ENCODE measurements at regions of chr11 and their contacts with region 1.

Region 1: DNA sequence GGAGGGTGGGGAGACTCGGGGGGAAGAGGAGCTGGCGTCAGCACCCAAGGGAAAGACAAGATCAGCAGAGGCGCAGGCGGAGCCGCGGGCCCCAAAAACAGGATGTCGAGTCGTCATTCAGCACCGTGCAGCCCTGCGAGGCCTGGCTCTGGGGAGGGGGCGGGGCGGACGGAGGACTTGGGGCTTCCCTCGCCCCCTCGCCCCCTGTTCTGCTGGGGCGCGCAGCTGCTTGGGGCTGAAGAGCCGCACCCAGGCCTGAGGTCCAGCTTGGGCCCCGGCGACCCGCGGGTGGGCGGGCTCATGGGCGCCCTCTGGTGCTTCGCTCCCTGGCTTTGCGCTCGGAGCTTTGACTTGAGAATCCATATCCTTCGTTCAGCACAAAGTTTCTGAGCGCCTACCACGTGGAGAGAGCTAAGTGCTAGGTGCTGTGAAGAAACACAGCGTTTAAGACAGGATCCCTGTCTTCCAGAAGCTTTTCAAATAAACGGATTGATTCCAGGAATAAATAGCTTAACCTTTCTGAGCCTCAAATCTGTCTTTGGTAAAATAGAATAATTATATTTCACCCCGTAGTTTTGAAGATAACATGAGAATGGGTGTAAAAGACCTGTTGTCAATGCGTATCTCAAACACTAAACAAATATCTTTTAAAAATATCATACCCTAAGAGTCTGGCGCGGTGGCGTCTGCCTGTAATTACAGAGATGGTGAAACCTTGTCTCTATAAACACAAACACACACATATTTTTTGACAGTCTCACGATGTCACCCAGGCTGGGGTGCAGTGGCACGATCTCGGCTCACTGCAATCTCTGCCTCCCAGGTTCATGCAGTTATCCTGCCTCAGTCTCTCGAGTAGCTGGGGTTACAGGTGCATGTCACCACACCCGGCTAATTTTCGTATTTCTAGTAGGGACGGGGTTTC is 929 bp upstream of the RHOG start:
- DNase-seq: peak; percentile 88
- H3K4me3 Mint-ChIP-seq: peak overlapping the region; percentile 80
- H3K27ac Mint-ChIP-seq: peak overlapping the region; percentile 62
- H3K4me1 Mint-ChIP-seq: peaks cover 22% of the 10 kb centered on the region
- H3K27me3 Mint-ChIP-seq: no peaks in the 10 kb centered on the region
- CTCF ChIP-seq: peak; percentile 71

Region 2: DNA sequence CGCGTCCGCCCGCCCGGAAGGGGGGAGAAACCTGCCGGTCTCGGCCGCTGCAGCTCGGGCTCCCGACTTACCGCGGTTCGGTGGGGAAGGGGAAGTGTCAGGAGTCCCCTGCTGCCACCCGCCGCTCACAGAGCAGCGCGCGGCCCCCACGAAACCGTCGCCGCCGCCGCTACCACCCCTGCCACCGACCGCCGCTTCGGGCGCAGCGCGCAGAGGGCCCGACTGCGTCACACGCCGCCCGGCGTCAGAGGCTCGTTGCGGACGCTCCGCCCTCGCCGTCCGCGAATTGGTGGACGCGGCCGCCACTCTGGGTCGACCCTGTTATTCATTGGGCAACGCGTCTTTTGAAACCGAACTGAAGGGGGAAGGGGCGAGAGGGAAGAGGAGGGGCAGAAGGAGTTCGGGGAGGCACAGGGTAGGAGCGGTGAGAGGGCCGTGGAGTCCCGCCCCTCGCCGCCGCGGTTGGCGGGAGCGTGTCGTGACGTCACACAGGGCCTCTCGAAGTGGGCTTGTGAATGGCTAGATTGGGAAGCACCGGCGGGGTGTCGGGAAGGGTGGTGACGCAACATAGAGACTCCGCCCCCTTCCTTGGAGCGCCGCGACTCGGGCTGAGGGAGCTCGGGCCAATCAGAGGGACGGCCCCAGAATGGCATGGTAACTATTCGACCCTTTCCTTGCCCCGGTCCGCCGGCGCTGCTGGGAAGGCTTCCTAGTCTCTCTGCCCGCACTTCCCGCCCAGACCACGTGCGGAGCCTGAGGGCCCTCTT is 44.2 kb before region 1 on chr11 and contains the start of gene NUP98:
- CTCF ChIA-PET with region 1: interaction called, 6 read pairs
- POLR2A ChIA-PET with region 1: interaction called, 19 read pairs
- intact Hi-C with region 1: loop called (anchors 1 kb)
- DNase-seq: peak; percentile 100
- H3K4me3 Mint-ChIP-seq: peak within 1 kb of the TSS; percentile 86
- H3K27ac Mint-ChIP-seq: peak within 1 kb of the TSS; percentile 93
- H3K4me1 Mint-ChIP-seq: peaks cover 9% of the 10 kb centered on the region
- H3K27me3 Mint-ChIP-seq: no peaks in the 10 kb centered on the region
- CTCF ChIP-seq: no peak
- total RNA-seq, gene NUP98: 79.4 and 83.7 TPM in 2 replicates

Region 3: DNA sequence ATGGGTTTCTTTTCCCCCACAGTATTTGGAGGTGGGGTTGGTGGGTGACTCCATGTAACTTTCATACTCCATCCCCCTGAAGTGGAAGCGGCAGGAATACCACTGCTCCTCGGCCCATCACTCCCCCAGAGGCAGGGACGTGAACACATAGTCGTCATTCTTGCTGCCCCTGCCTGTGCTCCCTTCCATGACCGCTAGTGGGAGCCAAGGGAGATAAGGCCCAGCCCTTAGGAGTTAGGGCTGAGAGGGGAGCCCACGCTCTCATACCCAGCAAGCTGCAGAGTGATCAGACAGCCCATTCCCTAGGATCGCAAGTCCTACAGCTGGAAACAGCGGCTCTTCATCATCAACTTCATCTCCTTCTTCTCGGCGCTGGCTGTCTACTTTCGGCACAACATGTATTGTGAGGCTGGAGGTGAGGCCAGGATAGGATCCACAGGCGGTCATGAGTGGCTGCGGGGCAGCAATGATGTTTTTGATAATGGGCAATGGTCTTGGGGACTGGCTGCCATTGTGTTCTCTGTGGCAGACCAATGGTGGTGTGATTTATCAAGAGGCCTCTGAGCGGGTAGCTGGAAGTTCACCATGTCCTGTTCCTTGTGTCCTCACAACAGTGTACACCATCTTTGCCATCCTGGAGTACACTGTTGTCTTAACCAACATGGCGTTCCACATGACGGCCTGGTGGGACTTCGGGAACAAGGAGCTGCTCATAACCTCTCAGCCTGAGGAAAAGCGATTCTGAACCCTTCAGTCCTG is 16.8 kb before region 1 on chr11:
- CTCF ChIA-PET with region 1: interaction called, 20 read pairs
- POLR2A ChIA-PET with region 1: interaction called, 4 read pairs
- intact Hi-C with region 1: no loop called
- DNase-seq: peak; percentile 43
- H3K4me3 Mint-ChIP-seq: no peak overlapping the region
- H3K27ac Mint-ChIP-seq: no peak overlapping the region
- H3K4me1 Mint-ChIP-seq: peaks cover 15% of the 10 kb centered on the region
- H3K27me3 Mint-ChIP-seq: no peaks in the 10 kb centered on the region
- CTCF ChIP-seq: peak; percentile 21

Region 4: GRCh38 chr11:4039011-4039410 is 197.3 kb after region 1 on chr11:
- CTCF ChIA-PET with region 1: interaction called, 59 read pairs
- POLR2A ChIA-PET with region 1: interaction called, 3 read pairs
- intact Hi-C with region 1: no loop called
- DNase-seq: no peak
- H3K4me3 Mint-ChIP-seq: no peak overlapping the region
- H3K27ac Mint-ChIP-seq: no peak overlapping the region
- H3K4me1 Mint-ChIP-seq: peaks cover 4% of the 10 kb centered on the region
- H3K27me3 Mint-ChIP-seq: no peaks in the 10 kb centered on the region
- CTCF ChIP-seq: no peak